PC-3 (cell line): ENCODE measurements at regions of chr9 and their contacts with region 1.

Region 1: DNA sequence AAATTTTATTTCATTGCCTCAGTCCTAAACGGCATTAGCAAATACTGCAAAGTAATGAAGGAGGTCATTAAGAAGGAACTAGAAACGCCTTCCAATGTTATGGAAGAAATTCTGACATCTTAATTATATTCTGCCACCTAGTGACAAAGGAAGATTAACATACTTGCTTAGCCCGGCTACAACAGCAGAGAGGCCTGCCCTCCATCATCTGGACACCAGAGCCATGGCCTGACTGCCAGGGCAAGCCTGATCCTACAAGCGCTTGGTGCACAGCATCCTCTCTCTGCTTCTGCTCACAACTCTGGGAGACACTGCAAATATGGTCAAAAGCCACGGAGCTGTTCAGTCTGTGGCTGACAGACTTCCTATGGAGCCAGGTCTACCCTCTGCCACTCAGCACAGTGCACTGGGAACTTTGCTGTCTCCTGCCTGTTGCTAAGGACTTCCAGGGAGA is 87.3 kb upstream of the SLC44A1 start:
- DNase-seq: peak; percentile 67
- ATAC-seq: peak; percentile 79
- H3K4me3 ChIP-seq: no peak overlapping the region
- H3K27ac ChIP-seq: no peak overlapping the region
- H3K4me1 ChIP-seq: peaks cover 7% of the 10 kb centered on the region
- H3K27me3 ChIP-seq: no peaks in the 10 kb centered on the region
- CTCF ChIP-seq: peak; percentile 64

Region 2: GRCh38 chr9:104780799-104781395 is 376.3 kb before region 1 on chr9:
- CTCF ChIA-PET with region 1: no interaction called
- POLR2A ChIA-PET with region 1: no interaction called
- intact Hi-C with region 1: loop called (anchors 1 kb)
- DNase-seq: peak; percentile 75
- ATAC-seq: peak; percentile 72
- H3K4me3 ChIP-seq: no peak overlapping the region
- H3K27ac ChIP-seq: peak overlapping the region; percentile 37; the same call in 1 of the 2 replicates
- H3K4me1 ChIP-seq: peaks cover 13% of the 10 kb centered on the region; the same call in 1 of the 2 replicates
- H3K27me3 ChIP-seq: no peaks in the 10 kb centered on the region
- CTCF ChIP-seq: peak; percentile 79

Region 3: GRCh38 chr9:104863180-104863883 is 293.8 kb before region 1 on chr9:
- CTCF ChIA-PET with region 1: interaction called, 3 read pairs
- POLR2A ChIA-PET with region 1: no interaction called
- intact Hi-C with region 1: loop called (anchors 1 kb)
- DNase-seq: peak; percentile 79
- ATAC-seq: peak; percentile 93
- H3K4me3 ChIP-seq: no peak overlapping the region
- H3K27ac ChIP-seq: peak overlapping the region; percentile 27
- H3K4me1 ChIP-seq: peaks cover 22% of the 10 kb centered on the region
- H3K27me3 ChIP-seq: no peaks in the 10 kb centered on the region
- CTCF ChIP-seq: peak; percentile 85

Region 4: GRCh38 chr9:104991144-104991953 is 165.8 kb before region 1 on chr9:
- CTCF ChIA-PET with region 1: no interaction called
- POLR2A ChIA-PET with region 1: no interaction called
- intact Hi-C with region 1: loop called (anchors 1 kb)
- DNase-seq: peak; percentile 68
- ATAC-seq: peak; percentile 80
- H3K4me3 ChIP-seq: peak overlapping the region; percentile 88
- H3K27ac ChIP-seq: peak overlapping the region; percentile 90
- H3K4me1 ChIP-seq: peaks cover 17% of the 10 kb centered on the region
- H3K27me3 ChIP-seq: no peaks in the 10 kb centered on the region
- CTCF ChIP-seq: no peak

Region 5: DNA sequence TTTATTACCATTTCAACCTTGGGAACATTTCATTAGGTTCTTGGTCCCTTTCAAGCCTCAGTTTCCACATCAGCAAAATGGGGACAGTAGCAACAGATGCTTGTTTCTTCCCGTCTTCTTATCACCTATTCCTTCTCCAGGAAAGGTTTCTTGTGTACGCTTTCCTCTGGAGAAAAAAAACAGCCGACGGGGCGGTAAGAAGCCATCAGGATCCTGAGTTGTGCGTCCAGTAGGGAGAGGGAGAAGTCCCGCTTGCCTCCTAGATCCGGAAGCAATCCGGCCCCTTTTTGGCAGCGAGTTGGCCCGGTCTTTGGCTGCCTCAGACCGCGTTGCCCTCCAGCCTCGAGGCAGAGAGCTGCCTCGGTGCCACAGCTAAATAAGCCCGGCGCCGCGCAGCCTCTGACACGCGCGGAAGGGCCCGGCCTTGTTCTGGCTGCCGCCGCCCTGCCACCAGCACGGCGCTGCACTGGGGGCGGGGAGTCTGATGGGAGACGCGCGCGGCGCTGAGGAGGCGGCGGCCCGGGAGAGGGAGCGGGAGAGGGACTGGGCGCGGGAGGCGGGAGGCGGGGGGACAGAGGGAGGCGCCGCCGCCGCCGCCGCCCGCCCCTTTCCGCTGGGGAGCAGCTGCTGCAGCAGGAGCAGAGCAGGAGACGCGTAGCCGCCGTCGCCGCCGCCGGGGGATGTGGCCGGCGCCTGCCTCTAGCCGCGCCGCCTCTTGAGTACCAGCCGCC is 87.0 kb after region 1 on chr9 and contains the start of gene SLC44A1:
- CTCF ChIA-PET with region 1: no interaction called
- POLR2A ChIA-PET with region 1: no interaction called
- intact Hi-C with region 1: loop called (anchors 1 kb)
- DNase-seq: peak; percentile 90
- ATAC-seq: peak; percentile 92
- H3K4me3 ChIP-seq: peak within 1 kb of the TSS; percentile 87
- H3K27ac ChIP-seq: peak within 1 kb of the TSS; percentile 48
- H3K4me1 ChIP-seq: peaks cover 11% of the 10 kb centered on the region
- H3K27me3 ChIP-seq: no peaks in the 10 kb centered on the region
- CTCF ChIP-seq: no peak
- total RNA-seq, gene SLC44A1: 15.3 and 16.1 TPM in 2 replicates

Region 6: DNA sequence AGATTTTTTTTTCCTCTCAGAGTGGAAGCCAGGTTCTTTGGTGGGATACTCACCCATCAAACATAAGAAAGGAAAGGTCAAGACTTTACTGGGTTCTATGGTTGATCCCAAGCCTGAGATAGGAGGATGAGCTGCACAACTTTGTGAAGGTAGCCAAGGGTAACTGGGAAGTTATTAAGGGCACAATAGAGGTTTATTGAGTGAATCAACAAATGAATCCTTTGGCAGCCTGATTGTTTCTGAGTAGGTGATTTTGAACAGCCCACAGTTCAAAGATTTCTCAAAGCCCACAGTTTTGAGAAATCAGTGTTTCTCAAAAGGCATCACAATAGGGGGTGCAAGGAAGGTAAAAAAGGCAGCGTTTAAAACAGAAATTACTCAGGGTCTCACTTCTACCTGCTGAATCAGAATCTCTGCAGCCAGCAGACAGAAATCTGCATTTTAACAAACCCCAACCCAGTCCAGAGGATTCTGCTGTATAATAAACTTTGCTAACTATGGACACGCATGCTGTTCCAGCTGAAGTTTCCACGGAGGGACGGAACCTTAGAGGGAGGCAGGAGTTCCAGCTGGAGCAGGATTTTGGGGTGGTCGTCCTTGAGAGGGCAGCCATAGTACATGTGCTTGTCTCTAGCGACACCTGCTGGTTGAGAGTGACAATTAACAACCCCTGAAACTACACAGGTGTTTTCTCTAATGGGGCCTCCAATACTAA is 257.9 kb after region 1 on chr9:
- CTCF ChIA-PET with region 1: interaction called, 3 read pairs
- POLR2A ChIA-PET with region 1: no interaction called
- intact Hi-C with region 1: loop called (anchors 1 kb)
- DNase-seq: peak; percentile 56
- ATAC-seq: peak; percentile 78
- H3K4me3 ChIP-seq: no peak overlapping the region
- H3K27ac ChIP-seq: no peak overlapping the region
- H3K4me1 ChIP-seq: peaks cover 8% of the 10 kb centered on the region; the same call in 1 of the 2 replicates
- H3K27me3 ChIP-seq: no peaks in the 10 kb centered on the region
- CTCF ChIP-seq: peak; percentile 94